Gastrocnemius medialis (tissue), 4 donors: ENCODE measurements at regions of chr1 and their contacts with region 1.

Region 1: GRCh38 chr1:32500387-32501209 is 35.7 kb downstream of the ZBTB8B start:
- DNase-seq: peak; percentile 59 to 76
- ATAC-seq: peak; percentile 55 to 69
- H3K4me3 ChIP-seq: peak overlapping the region; percentile 58 to 71 (median 63)
- H3K27ac ChIP-seq: peak overlapping the region; percentile 89 to 96 (median 92)
- H3K4me1 ChIP-seq: peaks cover 25 to 34% of the 10 kb centered on the region in 2 donors
- H3K27me3 ChIP-seq: no peaks in the 10 kb centered on the region
- CTCF ChIP-seq: peak in 4 of 5 experiments; percentile 36 to 60 (median 51)
- POLR2A ChIP-seq: peak; percentile 54 to 66

Region 2: DNA sequence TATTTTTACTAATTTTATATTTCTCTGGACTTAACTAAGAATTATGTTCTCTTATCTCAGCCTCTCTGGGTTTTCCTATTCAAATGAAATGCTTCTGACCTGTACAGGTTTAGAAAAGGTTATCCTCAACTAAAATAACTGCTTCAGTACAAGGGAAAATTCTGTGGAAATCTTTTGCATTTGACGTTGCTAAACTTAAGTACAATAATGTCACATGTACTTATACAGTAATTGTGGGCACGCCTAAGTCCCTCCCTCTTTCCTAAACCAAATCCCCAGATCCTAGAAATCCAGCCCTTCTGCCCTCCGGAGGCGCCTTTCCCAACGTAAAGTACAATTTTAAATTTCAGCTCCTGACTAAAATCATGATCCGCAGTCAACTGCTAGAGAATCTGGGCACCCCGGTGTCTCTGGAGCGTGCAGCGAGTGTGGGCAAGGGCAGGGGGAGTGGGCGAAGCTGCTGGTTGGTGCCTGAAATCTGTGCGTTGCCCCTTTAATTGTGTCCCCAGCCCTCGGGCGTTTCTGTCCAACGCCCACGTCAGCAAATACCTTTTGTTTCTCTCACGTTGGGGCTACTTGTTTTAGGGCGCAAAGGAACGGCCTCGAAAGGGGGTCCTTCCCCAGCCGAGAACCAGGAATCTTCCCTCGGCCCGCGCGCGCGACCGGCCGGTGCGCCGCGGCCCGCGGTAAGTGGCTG is 38.4 kb after region 1 on chr1 and contains the start of gene ZBTB8A:
- in situ Hi-C with region 1: no loop called
- intact Hi-C with region 1: loop called (anchors 2 kb)
- DNase-seq: peak in 1 of 2 donors; percentile 31
- ATAC-seq: peak; percentile 62 to 75
- H3K4me3 ChIP-seq: peak within 1 kb of the TSS; percentile 59 to 79 (median 67)
- H3K27ac ChIP-seq: peak within 1 kb of the TSS; percentile 51 to 80 (median 75)
- H3K4me1 ChIP-seq: no peaks in the 10 kb centered on the region
- H3K27me3 ChIP-seq: no peaks in the 10 kb centered on the region
- CTCF ChIP-seq: no peak
- POLR2A ChIP-seq: no peak
- total RNA-seq, gene ZBTB8A: 2.5 to 5.2 (median 3.9) TPM